WTC11 (cell line): ENCODE measurements at regions of chr16 and their contacts with region 1.

Region 1: DNA sequence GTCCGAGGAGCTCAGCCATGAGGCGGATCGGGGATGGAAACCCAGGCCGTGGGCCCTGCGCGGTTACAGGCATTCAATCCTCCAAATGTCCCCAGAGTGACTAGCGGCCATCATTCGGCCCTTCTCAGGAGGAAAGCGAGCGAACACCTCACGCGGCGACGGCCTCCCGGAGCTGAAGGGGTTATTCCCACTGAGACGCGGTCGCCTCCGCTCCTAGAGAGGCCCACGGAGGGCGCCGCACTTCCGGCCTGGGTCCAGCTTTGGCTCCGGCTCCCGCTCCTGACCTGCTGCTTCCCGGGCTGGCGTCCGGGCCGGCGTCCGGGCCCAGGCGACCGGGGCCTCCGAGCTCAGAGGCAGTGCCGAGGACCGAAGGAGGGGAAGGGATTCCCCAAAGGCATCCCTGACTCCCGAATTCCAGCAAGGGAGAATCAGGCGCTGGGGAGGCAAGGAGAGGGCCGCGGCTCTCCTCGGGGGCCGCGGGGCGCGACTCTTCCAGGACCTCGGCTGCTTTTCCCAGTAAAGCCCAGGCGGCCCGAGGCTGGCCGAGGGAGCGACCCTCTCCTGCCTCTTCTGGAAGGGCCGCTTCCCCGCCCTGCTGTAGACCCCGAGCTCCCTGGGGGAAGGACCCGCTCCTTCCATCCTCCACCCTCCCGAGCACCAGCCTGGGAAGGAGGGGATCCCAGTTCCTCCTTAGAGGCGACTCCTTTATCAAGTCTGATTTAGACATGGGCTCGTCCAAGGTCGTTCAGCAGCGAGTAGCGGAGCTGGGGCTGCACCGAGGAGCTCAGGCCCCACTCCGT is 18.6 kb upstream of the ZNF629 start:
- DNase-seq: peak; percentile 79
- ATAC-seq: peak; percentile 74
- H3K4me3 Mint-ChIP-seq: peak overlapping the region; percentile 82
- H3K27ac Mint-ChIP-seq: 0 out of 2 replicates have a peak overlapping the region, but pooled peaks have one; percentile 29
- H3K4me1 Mint-ChIP-seq: peaks cover 14% of the 10 kb centered on the region
- H3K27me3 Mint-ChIP-seq: peaks cover 79% of the 10 kb centered on the region
- CTCF ChIP-seq: no peak

Region 2: DNA sequence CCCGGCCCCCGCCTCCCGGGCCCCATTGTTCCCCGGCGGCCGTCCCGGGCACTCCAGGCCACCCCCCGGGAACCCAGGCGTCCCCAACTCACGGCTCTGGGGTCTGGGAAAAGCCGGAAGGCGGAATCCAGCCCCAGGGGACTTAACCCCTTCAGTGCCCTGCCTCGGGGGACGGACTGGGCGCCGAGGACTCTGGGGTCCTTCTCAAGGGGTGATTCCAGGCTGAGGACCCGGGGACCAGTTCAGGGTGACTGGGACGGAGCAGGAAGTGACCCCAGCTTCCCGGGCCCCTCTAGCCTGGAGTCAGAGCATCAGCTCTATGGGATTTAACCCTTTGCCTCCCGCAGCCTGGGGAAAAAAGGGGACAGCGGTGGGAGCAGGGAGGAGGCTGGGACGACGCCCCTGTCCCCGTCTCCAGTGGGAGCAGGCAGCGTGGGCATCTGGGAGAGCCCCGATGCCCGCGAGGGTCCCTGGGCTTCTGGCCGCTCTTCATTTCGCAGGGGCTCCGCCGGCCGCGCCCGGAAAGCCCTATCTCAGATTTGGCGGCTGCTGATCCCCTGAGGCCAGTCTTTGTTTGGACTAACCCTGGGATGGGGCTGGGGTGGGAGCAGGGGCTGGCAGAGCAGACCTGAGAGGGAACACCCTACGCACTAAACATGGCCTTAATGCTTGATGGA is 18.5 kb before region 1 on chr16 and contains the start of gene ZNF629:
- CTCF ChIA-PET with region 1: interaction called, 12 read pairs
- POLR2A ChIA-PET with region 1: interaction called, 15 read pairs
- DNase-seq: peak; percentile 70
- ATAC-seq: peak; percentile 77
- H3K4me3 Mint-ChIP-seq: peak within 1 kb of the TSS; percentile 84
- H3K27ac Mint-ChIP-seq: no peak within 1 kb of the TSS
- H3K4me1 Mint-ChIP-seq: peaks cover 13% of the 10 kb centered on the region
- H3K27me3 Mint-ChIP-seq: peaks cover 10% of the 10 kb centered on the region
- CTCF ChIP-seq: no peak
- total RNA-seq, gene ZNF629: 18.7 to 20.0 TPM (median 19.7 TPM) in 3 replicates

Region 3: DNA sequence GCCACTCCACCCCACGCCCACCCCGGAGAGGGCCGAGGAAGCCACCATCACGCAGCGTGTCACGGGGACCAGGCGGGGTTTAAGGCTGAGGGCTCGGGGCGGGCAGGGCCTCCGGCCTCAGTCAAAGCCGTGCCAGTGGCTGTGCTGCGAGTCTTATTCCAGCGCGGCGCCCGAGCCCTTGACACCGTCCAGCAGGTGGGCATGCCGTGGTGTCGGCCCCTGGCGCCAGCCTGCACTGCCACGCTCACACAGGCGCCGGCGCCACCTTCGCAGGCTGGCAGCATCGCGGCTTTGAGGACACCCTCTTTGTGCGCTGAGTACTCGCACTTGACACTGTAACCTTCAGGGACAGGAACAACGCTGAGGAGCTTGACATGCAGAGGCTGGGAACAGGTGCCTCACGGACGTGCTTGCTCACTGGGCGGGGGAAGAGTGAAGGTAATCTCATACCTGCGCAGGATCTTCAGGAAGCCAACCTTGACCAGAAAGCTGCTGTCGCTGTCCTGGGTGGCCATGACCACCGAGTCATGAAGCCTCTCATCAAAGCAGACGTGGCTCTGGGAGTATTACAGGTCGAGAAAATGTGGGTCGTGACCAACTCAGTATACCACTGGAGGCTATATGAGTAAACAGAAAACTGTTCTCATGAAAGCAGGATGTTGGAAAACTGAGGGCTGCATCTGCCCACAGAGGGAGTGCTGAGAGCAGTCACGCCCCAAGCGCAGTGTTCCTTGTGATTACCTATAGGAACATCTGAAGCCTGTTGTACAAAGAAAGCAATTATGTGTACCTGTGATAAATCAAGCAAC is 15.6 kb after region 1 on chr16:
- CTCF ChIA-PET with region 1: no interaction called
- POLR2A ChIA-PET with region 1: no interaction called
- DNase-seq: no peak
- ATAC-seq: no peak
- H3K4me3 Mint-ChIP-seq: no peak overlapping the region
- H3K27ac Mint-ChIP-seq: no peak overlapping the region
- H3K4me1 Mint-ChIP-seq: no peaks in the 10 kb centered on the region
- H3K27me3 Mint-ChIP-seq: peaks cover 6% of the 10 kb centered on the region
- CTCF ChIP-seq: no peak